H1 (cell line): ENCODE measurements at regions of chr4 and their contacts with region 1.

Region 1: GRCh38 chr4:122783301-122784215 is 43.1 kb upstream of the FGF2 start:
- DNase-seq: peak; percentile 72 to 95
- H3K4me3 ChIP-seq: peak overlapping the region in 1 of 4 experiments; percentile 16; a peak in 1 of 8 replicates
- H3K27ac ChIP-seq: peak overlapping the region; percentile 84
- H3K4me1 ChIP-seq: peaks cover 7 to 26% (median 16%) of the 10 kb centered on the region in 4 experiments
- H3K27me3 ChIP-seq: no peaks in the 10 kb centered on the region
- CTCF ChIP-seq: no peak
- EP300 ChIP-seq: no peak
- POLR2A ChIP-seq: peak; percentile 86 to 94
- RAD21 ChIP-seq: peak in 1 of 2 experiments; percentile 22; a peak in 1 of 4 replicates

Region 2: GRCh38 chr4:122500852-122501501 is 282.6 kb before region 1 on chr4:
- CTCF ChIA-PET with region 1: no interaction called
- POLR2A ChIA-PET with region 1: no interaction called
- DNase-seq: no peak
- H3K4me3 ChIP-seq: no peak overlapping the region
- H3K27ac ChIP-seq: no peak overlapping the region
- H3K4me1 ChIP-seq: no peaks in the 10 kb centered on the region
- H3K27me3 ChIP-seq: no peaks in the 10 kb centered on the region
- CTCF ChIP-seq: no peak
- EP300 ChIP-seq: no peak
- POLR2A ChIP-seq: no peak
- RAD21 ChIP-seq: no peak

Region 3: GRCh38 chr4:122764821-122765215 is 18.7 kb before region 1 on chr4:
- CTCF ChIA-PET with region 1: interaction called, 19 read pairs
- POLR2A ChIA-PET with region 1: interaction called, 13 read pairs
- DNase-seq: no peak
- H3K4me3 ChIP-seq: no peak overlapping the region
- H3K27ac ChIP-seq: no peak overlapping the region
- H3K4me1 ChIP-seq: peaks cover 0 to 5% (median 4%) of the 10 kb centered on the region in 4 experiments; a peak in 3 of 7 replicates
- H3K27me3 ChIP-seq: peaks cover 0 to 1% (median 0%) of the 10 kb centered on the region in 4 experiments; a peak in 1 of 7 replicates
- CTCF ChIP-seq: no peak
- EP300 ChIP-seq: no peak
- POLR2A ChIP-seq: no peak
- RAD21 ChIP-seq: no peak

Region 4: DNA sequence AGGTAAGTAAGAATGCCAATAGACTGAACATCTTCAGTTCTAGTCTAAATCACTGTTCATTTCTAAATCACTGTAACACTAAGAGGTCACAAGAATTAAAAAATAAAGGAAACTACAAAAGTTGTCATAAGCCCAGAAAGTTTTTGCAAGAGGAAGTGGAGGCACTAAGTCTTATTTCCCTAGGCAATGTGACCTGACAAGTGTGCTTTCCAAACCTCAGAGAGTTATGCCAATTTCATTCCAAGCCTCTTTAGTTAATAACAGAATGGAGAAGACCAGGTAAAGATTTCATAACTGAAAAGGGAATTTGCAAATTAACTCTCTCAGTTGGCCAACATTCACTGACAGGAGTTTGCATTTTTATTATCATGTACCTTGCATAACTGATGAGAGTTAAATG is 10.6 kb before region 1 on chr4:
- CTCF ChIA-PET with region 1: interaction called, 5 read pairs
- POLR2A ChIA-PET with region 1: interaction called, 13 read pairs
- DNase-seq: no peak
- H3K4me3 ChIP-seq: no peak overlapping the region
- H3K27ac ChIP-seq: no peak overlapping the region
- H3K4me1 ChIP-seq: peaks cover 0 to 8% (median 3%) of the 10 kb centered on the region in 4 experiments; a peak in 4 of 7 replicates
- H3K27me3 ChIP-seq: no peaks in the 10 kb centered on the region
- CTCF ChIP-seq: no peak
- EP300 ChIP-seq: no peak
- POLR2A ChIP-seq: no peak
- RAD21 ChIP-seq: no peak

Region 5: GRCh38 chr4:122798101-122798500 is 14.5 kb after region 1 on chr4:
- CTCF ChIA-PET with region 1: interaction called, 12 read pairs
- POLR2A ChIA-PET with region 1: interaction called, 79 read pairs
- DNase-seq: no peak
- H3K4me3 ChIP-seq: peak overlapping the region in 1 of 4 experiments; percentile 2; a peak in 1 of 8 replicates
- H3K27ac ChIP-seq: peak overlapping the region; percentile 91
- H3K4me1 ChIP-seq: peaks cover 3 to 17% (median 14%) of the 10 kb centered on the region in 4 experiments; a peak in 6 of 7 replicates
- H3K27me3 ChIP-seq: no peaks in the 10 kb centered on the region
- CTCF ChIP-seq: no peak
- EP300 ChIP-seq: no peak
- POLR2A ChIP-seq: no peak; a peak in 1 of 3 replicates
- RAD21 ChIP-seq: peak in 1 of 2 experiments; percentile 24; a peak in 1 of 4 replicates